Transverse colon (tissue), 4 donors: ENCODE measurements at regions of chr11 and their contacts with region 1.

Region 1: GRCh38 chr11:11798586-11799438 is 43.0 kb upstream of the USP47 start:
- DNase-seq: peak; percentile 88
- H3K4me3 ChIP-seq: no peak overlapping the region
- H3K27ac ChIP-seq: no peak overlapping the region
- H3K4me1 ChIP-seq: no peaks in the 10 kb centered on the region
- H3K27me3 ChIP-seq: peaks cover 13% of the 10 kb centered on the region
- CTCF ChIP-seq: peak; percentile 65 to 91 (median 88)
- EP300 ChIP-seq: no peak
- POLR2A ChIP-seq: no peak

Region 2: GRCh38 chr11:11901917-11902316 is 103.1 kb after region 1 on chr11:
- in situ Hi-C with region 1: no loop called
- intact Hi-C with region 1: loop called (anchors 5 kb)
- DNase-seq: no peak
- H3K4me3 ChIP-seq: no peak overlapping the region
- H3K27ac ChIP-seq: no peak overlapping the region
- H3K4me1 ChIP-seq: no peaks in the 10 kb centered on the region
- H3K27me3 ChIP-seq: no peaks in the 10 kb centered on the region
- CTCF ChIP-seq: no peak
- EP300 ChIP-seq: no peak
- POLR2A ChIP-seq: no peak